Heart left ventricle (tissue), 16 donors: ENCODE measurements at regions of chr10 and their contacts with region 1.

Region 1: GRCh38 chr10:18545621-18546305 is 105.6 kb downstream of the NSUN6 start:
- DNase-seq: no peak
- ATAC-seq: no peak
- H3K4me3 ChIP-seq: no peak overlapping the region
- H3K27ac ChIP-seq: no peak overlapping the region
- H3K4me1 ChIP-seq: peaks cover 0 to 6% (median 0%) of the 10 kb centered on the region in 12 donors
- H3K27me3 ChIP-seq: no peaks in the 10 kb centered on the region
- CTCF ChIP-seq: no peak
- POLR2A ChIP-seq: no peak

Region 2: DNA sequence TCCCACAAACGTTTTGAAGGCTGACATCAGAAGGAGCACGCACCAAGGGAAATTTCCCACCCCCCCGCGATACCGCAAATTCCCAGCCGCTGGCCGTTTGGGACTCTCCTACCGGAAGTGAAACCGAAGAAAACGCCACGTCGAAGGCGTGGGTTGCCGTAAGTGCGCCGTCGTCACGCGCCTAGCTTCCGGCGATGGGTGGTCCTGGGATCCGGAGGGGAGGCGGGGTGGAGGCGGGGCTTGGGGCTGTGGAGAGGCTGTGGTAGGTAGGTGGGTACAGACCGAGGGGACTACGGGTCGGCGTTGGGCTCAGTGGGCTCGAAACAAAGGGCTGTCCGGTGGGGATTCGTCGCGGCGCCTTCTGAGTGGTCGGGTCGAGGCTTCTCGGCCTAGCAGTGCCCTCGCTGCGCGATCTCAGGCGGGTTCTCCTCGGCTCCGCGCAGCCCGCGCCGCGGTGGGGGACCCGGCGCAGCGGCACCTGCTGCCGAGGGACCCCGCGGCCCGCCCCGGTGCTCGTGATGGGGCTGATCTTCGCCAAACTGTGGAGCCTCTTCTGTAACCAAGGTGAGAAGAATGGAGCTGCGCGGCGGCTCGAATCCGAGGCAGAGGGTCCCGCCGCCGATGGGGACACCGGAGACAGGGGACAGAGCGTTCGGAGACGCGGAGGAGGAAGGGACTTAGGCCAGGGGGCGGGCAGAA is 113.5 kb after region 1 on chr10 and contains the start of gene ARL5B:
- intact Hi-C with region 1: loop called in 1 of 10 experiments (anchors 10 kb)
- DNase-seq: peak; percentile 99
- ATAC-seq: peak; percentile 99 to 100 (median 99)
- H3K4me3 ChIP-seq: peak within 1 kb of the TSS; percentile 61 to 99 (median 92)
- H3K27ac ChIP-seq: peak within 1 kb of the TSS; percentile 74 to 99 (median 93)
- H3K4me1 ChIP-seq: peaks cover 3 to 35% (median 26%) of the 10 kb centered on the region in 12 donors
- H3K27me3 ChIP-seq: no peaks in the 10 kb centered on the region
- CTCF ChIP-seq: no peak
- POLR2A ChIP-seq: peak; percentile 16 to 68
- total RNA-seq, gene ARL5B: 4.7 to 10.2 (median 6.9) TPM